Activated CD4-positive, alpha-beta T cell treated with anti-CD3 and anti-CD28 coated beads for 36 hours (primary cell): ENCODE measurements at regions of chr10 and their contacts with region 1.

Region 1: GRCh38 chr10:14299556-14299955 is 31.2 kb downstream of the FRMD4A start:
- DNase-seq: no peak
- ATAC-seq: no peak
- H3K4me3 Mint-ChIP-seq: no peak overlapping the region
- H3K27ac Mint-ChIP-seq: no peak overlapping the region
- H3K4me1 Mint-ChIP-seq: no peaks in the 10 kb centered on the region
- H3K27me3 Mint-ChIP-seq: peaks cover 17% of the 10 kb centered on the region

Region 2: GRCh38 chr10:13536674-13537366 is 762.7 kb before region 1 on chr10:
- CTCF ChIA-PET with region 1: no interaction called
- POLR2A ChIA-PET with region 1: interaction called, 13 read pairs
- intact Hi-C with region 1: no loop called
- DNase-seq: peak; percentile 66
- ATAC-seq: peak; percentile 76
- H3K4me3 Mint-ChIP-seq: no peak overlapping the region
- H3K27ac Mint-ChIP-seq: no peak overlapping the region
- H3K4me1 Mint-ChIP-seq: no peaks in the 10 kb centered on the region
- H3K27me3 Mint-ChIP-seq: peaks cover 47% of the 10 kb centered on the region

Region 3: DNA sequence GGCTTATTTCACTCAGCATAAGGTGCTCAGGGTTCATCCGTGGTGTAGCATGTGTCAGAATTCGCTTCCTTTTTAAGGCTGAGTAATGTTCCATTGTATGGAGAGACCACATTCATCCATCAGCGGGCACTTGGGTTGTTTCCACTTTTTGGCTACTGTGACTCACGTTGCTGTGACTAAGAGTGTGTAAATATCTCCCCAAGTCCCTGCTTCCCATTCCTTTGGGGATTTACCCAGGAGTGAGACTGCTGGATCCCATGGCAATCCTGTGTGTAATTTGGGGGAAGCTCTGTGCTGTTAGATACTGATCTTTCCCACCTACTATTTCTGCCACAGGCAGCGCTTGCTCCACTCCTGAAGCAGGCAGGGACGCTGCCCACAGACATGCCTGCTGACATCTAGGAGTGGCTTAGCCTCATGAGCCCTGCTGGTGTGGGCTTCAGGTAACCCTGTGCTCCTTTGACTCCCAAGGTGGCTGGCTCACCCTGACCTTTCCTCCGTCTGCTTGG is 314.9 kb before region 1 on chr10:
- CTCF ChIA-PET with region 1: no interaction called
- POLR2A ChIA-PET with region 1: no interaction called
- intact Hi-C with region 1: no loop called
- DNase-seq: peak; percentile 17
- ATAC-seq: peak; percentile 81
- H3K4me3 Mint-ChIP-seq: no peak overlapping the region
- H3K27ac Mint-ChIP-seq: no peak overlapping the region
- H3K4me1 Mint-ChIP-seq: peaks cover 15% of the 10 kb centered on the region
- H3K27me3 Mint-ChIP-seq: no peaks in the 10 kb centered on the region

Region 4: GRCh38 chr10:15378569-15378968 is 1079.0 kb after region 1 on chr10:
- CTCF ChIA-PET with region 1: no interaction called
- POLR2A ChIA-PET with region 1: no interaction called
- intact Hi-C with region 1: no loop called
- DNase-seq: no peak
- ATAC-seq: no peak
- H3K4me3 Mint-ChIP-seq: no peak overlapping the region
- H3K27ac Mint-ChIP-seq: no peak overlapping the region
- H3K4me1 Mint-ChIP-seq: peaks cover 6% of the 10 kb centered on the region
- H3K27me3 Mint-ChIP-seq: peaks cover 11% of the 10 kb centered on the region